ENCODE measurements at regions of chr18 and their contacts with region 1.

Region 1: GRCh38 chr18:68583685-68584084 is 131.2 kb downstream of the TMX3 start:
- DNase-seq: no peak
- ATAC-seq: no peak
- H3K4me3 ChIP-seq: no peak overlapping the region
- H3K27ac ChIP-seq: no peak overlapping the region
- H3K4me1 ChIP-seq: no peaks in the 10 kb centered on the region
- H3K27me3 ChIP-seq: no peaks in the 10 kb centered on the region
- CTCF ChIP-seq: no peak

Region 2: GRCh38 chr18:68596016-68596415 is 12.3 kb after region 1 on chr18:
- intact Hi-C with region 1: loop called in 1 of 10 experiments (anchors 1 kb)
- DNase-seq: no peak
- ATAC-seq: no peak
- H3K4me3 ChIP-seq: no peak overlapping the region
- H3K27ac ChIP-seq: no peak overlapping the region
- H3K4me1 ChIP-seq: no peaks in the 10 kb centered on the region
- H3K27me3 ChIP-seq: no peaks in the 10 kb centered on the region
- CTCF ChIP-seq: no peak

Measured in heart right ventricle (tissue), 16 donors.